Caco-2 (cell line): ENCODE measurements at regions of chr6 and their contacts with region 1.

Region 1: GRCh38 chr6:138017166-138017757 is 90.0 kb downstream of the PERP start:
- DNase-seq: peak; percentile 58 to 71
- H3K4me3 ChIP-seq: no peak overlapping the region
- H3K4me3 Mint-ChIP-seq: peak overlapping the region; percentile 48
- H3K27ac Mint-ChIP-seq: peak overlapping the region; percentile 96
- H3K4me1 ChIP-seq: peaks cover 57% of the 10 kb centered on the region
- H3K4me1 Mint-ChIP-seq: peaks cover 36% of the 10 kb centered on the region
- H3K27me3 ChIP-seq: no peaks in the 10 kb centered on the region
- H3K27me3 Mint-ChIP-seq: no peaks in the 10 kb centered on the region
- CTCF ChIP-seq: no peak

Region 2: GRCh38 chr6:137661601-137662000 is 355.7 kb before region 1 on chr6:
- CTCF ChIA-PET with region 1: no interaction called
- POLR2A ChIA-PET with region 1: no interaction called
- intact Hi-C with region 1: loop called (anchors 1 kb)
- DNase-seq: peak; percentile 42 to 44
- H3K4me3 ChIP-seq: no peak overlapping the region
- H3K4me3 Mint-ChIP-seq: no peak overlapping the region
- H3K27ac Mint-ChIP-seq: no peak overlapping the region
- H3K4me1 ChIP-seq: peaks cover 52% of the 10 kb centered on the region
- H3K4me1 Mint-ChIP-seq: peaks cover 17% of the 10 kb centered on the region
- H3K27me3 ChIP-seq: no peaks in the 10 kb centered on the region
- H3K27me3 Mint-ChIP-seq: no peaks in the 10 kb centered on the region
- CTCF ChIP-seq: peak; percentile 15 to 27

Region 3: DNA sequence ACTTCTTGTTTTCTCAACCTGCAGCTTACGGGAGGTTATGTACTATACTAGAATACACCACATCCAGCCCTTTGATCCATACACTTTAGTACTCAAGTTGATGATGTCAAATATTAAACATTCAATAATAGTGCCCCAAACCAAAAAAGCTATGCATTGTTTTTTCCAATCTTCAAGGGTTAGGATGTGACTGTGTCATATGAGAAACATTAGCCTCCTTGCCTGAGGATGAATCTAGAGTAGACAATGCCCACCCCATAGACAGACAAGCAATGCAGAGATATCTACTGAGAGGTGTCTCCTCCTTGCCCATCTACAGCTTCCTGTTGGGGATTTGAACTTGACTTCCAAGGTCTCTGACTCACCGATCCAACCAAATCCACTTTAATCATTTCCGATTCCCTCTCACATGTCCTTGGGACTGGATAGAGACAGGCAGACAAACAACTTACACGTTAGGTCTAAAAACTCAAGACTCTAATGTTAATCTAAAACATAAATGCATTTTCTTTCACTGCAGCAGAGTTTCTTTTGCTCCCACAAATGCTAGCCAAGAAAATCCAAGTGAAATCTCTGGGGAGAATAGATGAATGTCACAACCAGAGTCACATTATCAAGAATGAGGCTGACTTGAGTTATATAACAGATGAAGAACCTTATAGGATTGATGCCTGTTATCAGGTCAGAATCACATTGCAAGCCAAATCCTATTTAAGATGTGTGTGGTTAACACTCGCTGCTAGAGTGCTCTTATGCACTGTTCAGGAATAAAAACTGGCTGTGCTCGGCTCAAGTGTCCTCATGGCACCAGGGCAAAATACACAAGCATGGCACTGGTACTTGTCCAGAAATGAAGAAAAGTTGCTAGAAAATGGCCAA is 225.7 kb before region 1 on chr6:
- CTCF ChIA-PET with region 1: no interaction called
- POLR2A ChIA-PET with region 1: no interaction called
- intact Hi-C with region 1: no loop called
- DNase-seq: no peak
- H3K4me3 ChIP-seq: no peak overlapping the region
- H3K4me3 Mint-ChIP-seq: no peak overlapping the region
- H3K27ac Mint-ChIP-seq: no peak overlapping the region
- H3K4me1 ChIP-seq: peaks cover 37% of the 10 kb centered on the region
- H3K4me1 Mint-ChIP-seq: peaks cover 26% of the 10 kb centered on the region
- H3K27me3 ChIP-seq: no peaks in the 10 kb centered on the region
- H3K27me3 Mint-ChIP-seq: no peaks in the 10 kb centered on the region
- CTCF ChIP-seq: no peak

Region 4: GRCh38 chr6:137951064-137951597 is 66.1 kb before region 1 on chr6:
- CTCF ChIA-PET with region 1: no interaction called
- POLR2A ChIA-PET with region 1: no interaction called
- intact Hi-C with region 1: no loop called
- DNase-seq: no peak
- H3K4me3 ChIP-seq: no peak overlapping the region
- H3K4me3 Mint-ChIP-seq: no peak overlapping the region
- H3K27ac Mint-ChIP-seq: no peak overlapping the region
- H3K4me1 ChIP-seq: peaks cover 16% of the 10 kb centered on the region; the same call in 1 of the 2 replicates
- H3K4me1 Mint-ChIP-seq: peaks cover 28% of the 10 kb centered on the region
- H3K27me3 ChIP-seq: no peaks in the 10 kb centered on the region
- H3K27me3 Mint-ChIP-seq: no peaks in the 10 kb centered on the region
- CTCF ChIP-seq: no peak

Region 5: GRCh38 chr6:137975188-137975940 is 41.9 kb before region 1 on chr6:
- CTCF ChIA-PET with region 1: no interaction called
- POLR2A ChIA-PET with region 1: no interaction called
- intact Hi-C with region 1: no loop called
- DNase-seq: no peak
- H3K4me3 ChIP-seq: no peak overlapping the region
- H3K4me3 Mint-ChIP-seq: no peak overlapping the region
- H3K27ac Mint-ChIP-seq: peak overlapping the region; percentile 26
- H3K4me1 ChIP-seq: peaks cover 46% of the 10 kb centered on the region
- H3K4me1 Mint-ChIP-seq: peaks cover 34% of the 10 kb centered on the region
- H3K27me3 ChIP-seq: no peaks in the 10 kb centered on the region
- H3K27me3 Mint-ChIP-seq: no peaks in the 10 kb centered on the region
- CTCF ChIP-seq: peak in 1 of 2 experiments; percentile 25

Region 6: DNA sequence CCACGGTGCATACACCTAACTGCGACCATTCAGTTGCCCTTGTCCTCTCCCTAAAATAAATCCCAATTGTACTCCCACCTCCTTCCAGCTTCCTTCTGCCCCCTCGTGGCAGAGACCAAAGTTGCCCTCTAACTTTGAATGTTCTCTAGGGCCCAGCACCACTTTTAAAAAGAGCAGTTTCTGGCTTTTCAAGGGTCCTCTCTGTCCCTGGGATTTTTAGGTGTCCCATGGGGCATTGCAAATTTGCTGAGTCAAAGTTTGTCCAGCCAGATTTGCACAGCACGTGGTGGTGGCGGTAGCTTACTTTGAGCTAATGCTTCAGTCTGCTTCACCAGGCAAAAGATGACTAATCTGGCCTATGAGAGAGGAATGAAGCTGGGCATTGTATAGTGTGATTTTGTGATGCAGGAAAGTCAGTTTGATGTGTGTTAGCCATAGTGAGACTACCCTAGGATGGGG is 10.2 kb before region 1 on chr6:
- CTCF ChIA-PET with region 1: interaction called, 5 read pairs
- POLR2A ChIA-PET with region 1: no interaction called
- intact Hi-C with region 1: loop called (anchors 1 kb)
- DNase-seq: peak; percentile 38 to 48
- H3K4me3 ChIP-seq: no peak overlapping the region
- H3K4me3 Mint-ChIP-seq: no peak overlapping the region
- H3K27ac Mint-ChIP-seq: peak overlapping the region; percentile 18
- H3K4me1 ChIP-seq: peaks cover 12% of the 10 kb centered on the region
- H3K4me1 Mint-ChIP-seq: peaks cover 27% of the 10 kb centered on the region
- H3K27me3 ChIP-seq: no peaks in the 10 kb centered on the region
- H3K27me3 Mint-ChIP-seq: no peaks in the 10 kb centered on the region
- CTCF ChIP-seq: peak; percentile 62 to 63

Region 7: GRCh38 chr6:138088330-138088766 is 71.1 kb after region 1 on chr6:
- CTCF ChIA-PET with region 1: no interaction called
- POLR2A ChIA-PET with region 1: no interaction called
- intact Hi-C with region 1: loop called (anchors 1 kb)
- DNase-seq: peak in 1 of 2 experiments; percentile 49
- H3K4me3 ChIP-seq: no peak overlapping the region
- H3K4me3 Mint-ChIP-seq: peak overlapping the region; percentile 11
- H3K27ac Mint-ChIP-seq: peak overlapping the region; percentile 58
- H3K4me1 ChIP-seq: peaks cover 28% of the 10 kb centered on the region
- H3K4me1 Mint-ChIP-seq: peaks cover 27% of the 10 kb centered on the region
- H3K27me3 ChIP-seq: no peaks in the 10 kb centered on the region
- H3K27me3 Mint-ChIP-seq: no peaks in the 10 kb centered on the region
- CTCF ChIP-seq: no peak

Region 8: DNA sequence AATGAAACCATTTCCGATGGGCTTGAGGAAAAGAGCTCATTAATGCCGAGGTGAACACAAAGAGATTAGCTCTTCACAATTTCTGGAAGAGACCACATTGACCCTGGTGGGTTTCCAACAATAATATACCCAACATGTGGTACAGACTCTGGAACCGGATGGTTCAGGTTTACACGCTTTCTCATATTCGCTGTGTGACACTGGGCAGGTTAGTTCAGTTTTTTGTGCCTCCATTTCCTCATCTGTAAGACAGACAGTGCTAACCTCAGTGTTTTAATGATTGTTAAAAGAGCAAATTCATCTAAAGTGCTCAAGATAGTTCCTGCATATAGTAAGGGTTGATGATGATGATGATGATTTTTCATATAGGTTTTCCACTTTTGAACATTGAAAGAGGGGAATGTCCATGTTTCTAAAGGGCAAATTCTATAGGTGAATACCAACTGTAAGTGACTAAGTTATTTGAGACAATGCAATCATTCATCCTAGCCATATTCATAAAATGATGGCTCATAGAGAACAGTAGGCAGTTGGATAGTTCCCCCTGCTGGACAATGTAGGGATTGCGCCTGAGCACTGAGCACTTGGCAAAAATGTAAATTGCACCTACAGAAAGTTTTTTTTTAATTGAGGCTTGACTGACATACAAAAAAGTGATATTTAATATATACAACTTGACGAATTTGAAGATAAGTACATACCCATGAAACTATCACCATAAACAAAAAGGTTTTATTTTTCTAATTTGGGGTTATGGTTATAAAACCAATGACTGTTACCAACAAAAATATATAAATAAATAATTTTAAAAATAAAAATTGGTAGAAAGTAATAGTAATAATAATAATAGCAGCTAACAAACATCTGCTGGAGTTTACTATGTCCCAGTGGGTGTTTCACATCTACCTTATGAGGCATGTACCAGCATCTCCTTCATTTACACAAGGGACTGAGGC is 92.1 kb after region 1 on chr6:
- CTCF ChIA-PET with region 1: interaction called, 3 read pairs
- POLR2A ChIA-PET with region 1: no interaction called
- intact Hi-C with region 1: loop called (anchors 1 kb)
- DNase-seq: peak; percentile 55 to 74
- H3K4me3 ChIP-seq: no peak overlapping the region
- H3K4me3 Mint-ChIP-seq: peak overlapping the region; percentile 55
- H3K27ac Mint-ChIP-seq: peak overlapping the region; percentile 33
- H3K4me1 ChIP-seq: peaks cover 8% of the 10 kb centered on the region
- H3K4me1 Mint-ChIP-seq: peaks cover 6% of the 10 kb centered on the region
- H3K27me3 ChIP-seq: no peaks in the 10 kb centered on the region
- H3K27me3 Mint-ChIP-seq: no peaks in the 10 kb centered on the region
- CTCF ChIP-seq: peak; percentile 72 to 84

Region 9: DNA sequence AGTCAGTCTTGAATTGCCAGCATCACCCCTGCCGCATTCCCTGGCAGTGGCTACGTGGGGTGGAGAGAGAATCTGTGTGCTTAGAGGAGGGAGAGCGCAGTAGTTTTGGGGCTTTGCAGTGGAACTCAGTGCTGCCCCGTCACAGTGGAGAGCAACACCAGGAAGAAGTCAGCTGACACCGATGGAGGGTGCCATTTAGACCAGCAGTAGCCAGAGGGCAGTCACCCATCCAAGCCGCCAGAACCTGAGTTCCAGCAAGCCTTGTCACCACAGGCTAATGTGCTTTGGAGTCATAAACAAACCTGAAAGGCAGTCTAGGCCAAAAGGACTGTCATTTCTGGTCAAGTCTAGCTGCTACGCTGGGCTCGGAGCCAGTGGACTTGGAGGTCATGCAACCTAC is 111.9 kb after region 1 on chr6:
- CTCF ChIA-PET with region 1: no interaction called
- POLR2A ChIA-PET with region 1: no interaction called
- intact Hi-C with region 1: no loop called
- DNase-seq: no peak
- H3K4me3 ChIP-seq: no peak overlapping the region
- H3K4me3 Mint-ChIP-seq: no peak overlapping the region
- H3K27ac Mint-ChIP-seq: no peak overlapping the region
- H3K4me1 ChIP-seq: no peaks in the 10 kb centered on the region
- H3K4me1 Mint-ChIP-seq: no peaks in the 10 kb centered on the region
- H3K27me3 ChIP-seq: no peaks in the 10 kb centered on the region
- H3K27me3 Mint-ChIP-seq: peaks cover 2% of the 10 kb centered on the region
- CTCF ChIP-seq: no peak